ENCODE measurements at regions of chr17 and their contacts with region 1.

Region 1: DNA sequence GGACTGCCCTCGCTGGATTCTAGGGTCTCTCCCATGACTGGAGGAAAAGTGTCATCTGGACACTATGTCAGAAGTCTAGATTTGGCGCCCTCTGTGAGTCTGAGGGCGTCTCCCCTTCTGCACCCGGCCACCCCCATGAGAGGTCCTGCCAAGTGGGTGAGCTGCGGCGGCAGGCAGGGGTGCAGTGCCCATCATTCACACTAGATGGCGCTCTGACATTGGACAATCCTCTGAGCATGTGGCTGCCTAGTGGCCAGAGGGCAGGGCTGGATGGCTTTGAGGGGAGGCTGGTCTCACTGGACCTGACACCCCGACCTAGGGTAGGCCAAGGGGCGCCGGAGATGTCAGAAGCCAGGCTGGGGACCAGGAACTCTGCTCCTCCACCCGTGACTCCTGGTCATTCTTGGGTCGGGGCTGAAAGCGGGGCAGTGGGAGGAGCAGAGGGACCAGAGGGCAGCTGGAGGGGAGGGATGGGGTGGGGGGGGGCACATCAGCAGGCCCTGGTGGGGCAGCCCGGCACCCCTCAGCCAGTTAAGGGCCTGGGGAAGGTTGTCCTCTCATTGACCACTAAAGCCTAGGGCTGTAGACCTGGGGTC is 28.0 kb downstream of the MRM1 start:
- DNase-seq: peak; percentile 89
- H3K4me3 ChIP-seq: peak overlapping the region in 1 of 2 experiments; percentile 55; a peak in 1 of 4 replicates
- H3K27ac ChIP-seq: no peak overlapping the region
- H3K4me1 ChIP-seq: peaks cover 0 to 18% of the 10 kb centered on the region in 2 experiments; a peak in 1 of 4 replicates
- H3K27me3 ChIP-seq: no peaks in the 10 kb centered on the region
- CTCF ChIP-seq: peak; percentile 96
- EP300 ChIP-seq: no peak
- RAD21 ChIP-seq: peak; percentile 98

Region 2: DNA sequence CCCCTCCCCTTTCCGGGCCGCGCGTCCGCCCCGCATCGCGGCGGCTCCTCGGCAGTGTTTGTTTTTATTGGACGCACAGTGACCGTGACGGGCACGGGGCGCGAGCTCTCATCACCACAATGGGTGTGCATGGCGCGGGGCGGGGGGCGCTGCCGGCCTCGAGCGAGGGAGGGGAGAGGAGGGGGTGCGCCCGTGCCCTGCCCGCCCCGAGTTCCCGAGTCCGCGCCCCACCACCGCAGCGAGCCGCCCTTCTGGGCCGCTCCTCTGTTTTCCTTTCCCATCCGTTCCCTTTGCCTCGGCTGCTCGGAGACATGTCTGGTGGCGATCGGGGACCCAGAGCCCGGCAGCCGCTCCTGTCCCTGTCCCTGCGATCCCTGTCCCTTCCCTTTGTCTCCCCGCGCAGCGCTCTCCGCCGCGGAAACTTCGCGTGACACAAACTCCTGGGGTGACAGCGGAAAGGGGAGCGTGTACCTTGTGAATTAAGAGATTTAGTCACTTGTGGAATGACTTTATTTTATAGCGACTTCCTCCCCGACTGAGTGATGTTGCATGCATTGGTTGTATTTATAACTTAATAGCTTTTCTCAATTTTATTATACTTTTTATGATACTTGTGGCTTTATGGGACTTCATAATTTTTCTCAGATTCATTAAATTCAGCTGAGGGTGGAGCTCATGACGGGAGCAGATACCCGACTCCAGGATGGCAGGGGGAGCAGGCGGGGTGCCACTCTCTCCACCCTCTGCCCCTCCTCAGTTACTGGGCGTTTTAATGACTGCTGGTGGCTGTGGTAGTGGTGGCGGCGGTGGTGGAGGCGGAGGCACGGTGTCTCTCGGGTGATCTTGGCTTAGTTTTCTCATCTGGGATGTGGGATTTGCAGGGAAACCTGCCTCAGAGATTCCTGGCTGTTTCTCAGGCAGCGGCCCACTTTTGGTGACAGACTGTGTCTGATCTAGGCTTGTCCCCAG is 12.8 kb after region 1 on chr17:
- CTCF ChIA-PET with region 1: interaction called, 16 read pairs
- POLR2A ChIA-PET with region 1: no interaction called
- DNase-seq: peak; percentile 83
- H3K4me3 ChIP-seq: peak overlapping the region; percentile 37; a peak in 3 of 4 replicates
- H3K27ac ChIP-seq: no peak overlapping the region
- H3K4me1 ChIP-seq: peaks cover 0 to 2% of the 10 kb centered on the region in 2 experiments; a peak in 1 of 4 replicates
- H3K27me3 ChIP-seq: peaks cover 40% of the 10 kb centered on the region
- CTCF ChIP-seq: no peak
- EP300 ChIP-seq: no peak
- RAD21 ChIP-seq: no peak

Region 3: DNA sequence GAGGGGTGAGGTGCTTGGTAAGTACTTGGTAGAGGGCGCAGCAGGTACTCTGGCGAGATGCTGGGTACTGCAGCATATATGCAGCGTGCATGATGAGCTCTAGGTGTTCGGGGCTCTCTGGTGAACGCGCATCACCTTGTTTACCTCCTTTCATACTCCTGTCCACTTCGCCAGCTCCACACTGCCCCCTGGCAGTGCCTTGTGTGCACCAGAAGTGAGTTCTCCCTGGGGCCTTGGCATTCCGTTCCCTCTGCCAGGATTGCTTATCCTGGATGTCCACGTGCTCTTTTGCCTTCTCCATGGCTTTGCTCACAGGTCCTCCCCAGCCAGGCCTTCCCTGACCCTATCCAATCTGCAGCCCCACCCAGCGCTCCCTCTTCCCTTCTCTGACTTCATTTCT is 126.2 kb after region 1 on chr17:
- CTCF ChIA-PET with region 1: interaction called, 11 read pairs
- POLR2A ChIA-PET with region 1: no interaction called
- DNase-seq: peak; percentile 68
- H3K4me3 ChIP-seq: no peak overlapping the region
- H3K27ac ChIP-seq: no peak overlapping the region
- H3K4me1 ChIP-seq: no peaks in the 10 kb centered on the region; a peak in 1 of 4 replicates
- H3K27me3 ChIP-seq: no peaks in the 10 kb centered on the region
- CTCF ChIP-seq: peak; percentile 24; the same call in 1 of the 2 replicates
- EP300 ChIP-seq: no peak
- RAD21 ChIP-seq: peak; percentile 75

Region 4: DNA sequence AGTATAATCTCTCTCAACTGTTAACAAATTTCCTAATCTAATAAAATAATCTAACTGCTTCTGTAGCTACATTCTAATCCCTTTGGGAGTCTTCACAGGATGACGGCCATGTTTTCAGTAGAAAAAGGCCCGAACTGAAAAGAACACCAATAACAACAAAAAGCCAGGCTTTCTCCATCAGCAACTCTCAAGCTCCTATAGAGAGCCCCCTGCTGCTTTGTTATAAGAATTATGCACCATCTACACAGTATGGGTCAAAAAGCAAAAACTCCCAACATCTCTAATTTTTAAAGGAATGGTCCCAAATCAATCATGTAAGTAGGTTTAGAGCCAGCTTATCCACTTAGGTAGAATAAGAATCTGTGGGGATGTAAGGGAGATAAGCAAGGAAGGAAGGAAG is 582.8 kb after region 1 on chr17:
- CTCF ChIA-PET with region 1: interaction called, 28 read pairs
- POLR2A ChIA-PET with region 1: no interaction called
- DNase-seq: no peak
- H3K4me3 ChIP-seq: no peak overlapping the region
- H3K27ac ChIP-seq: no peak overlapping the region
- H3K4me1 ChIP-seq: peaks cover 5 to 8% of the 10 kb centered on the region in 2 experiments; a peak in 3 of 4 replicates
- H3K27me3 ChIP-seq: no peaks in the 10 kb centered on the region
- CTCF ChIP-seq: peak; percentile 48
- EP300 ChIP-seq: no peak
- RAD21 ChIP-seq: peak; percentile 46

Region 5: DNA sequence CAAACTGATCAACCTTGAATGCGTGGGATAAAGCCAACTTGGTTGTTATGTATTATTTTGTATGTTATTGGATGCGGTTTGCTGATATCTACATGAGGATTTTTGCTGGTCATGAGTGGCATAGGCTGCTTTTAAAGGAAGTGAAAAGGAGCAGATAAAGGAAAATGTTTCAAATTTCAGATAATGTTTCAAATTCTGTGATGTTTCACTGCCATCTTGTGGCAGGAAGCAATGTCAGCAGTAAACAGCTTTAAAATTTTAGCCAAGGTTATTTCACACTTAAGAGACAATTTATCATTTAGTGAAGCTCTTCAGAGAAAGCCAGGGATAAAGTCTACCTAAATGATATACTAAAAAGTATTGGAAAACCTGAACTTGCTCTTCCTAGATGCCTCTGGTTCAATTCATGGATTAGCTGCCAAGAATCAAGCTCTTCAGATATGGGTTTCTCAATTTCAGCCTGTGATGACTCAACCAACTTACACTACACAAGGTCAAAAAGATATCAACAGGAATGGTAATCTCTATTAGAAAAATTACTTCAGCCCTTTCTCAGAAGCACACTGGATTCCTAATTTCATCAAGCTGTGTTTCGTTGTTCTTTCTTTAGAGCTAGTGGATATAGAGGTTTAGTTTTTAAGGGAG is 610.5 kb after region 1 on chr17:
- CTCF ChIA-PET with region 1: interaction called, 26 read pairs
- POLR2A ChIA-PET with region 1: no interaction called
- DNase-seq: peak; percentile 33
- H3K4me3 ChIP-seq: no peak overlapping the region
- H3K27ac ChIP-seq: no peak overlapping the region
- H3K4me1 ChIP-seq: no peaks in the 10 kb centered on the region
- H3K27me3 ChIP-seq: no peaks in the 10 kb centered on the region
- CTCF ChIP-seq: peak; percentile 88
- EP300 ChIP-seq: no peak
- RAD21 ChIP-seq: peak; percentile 78